MCF 10A (cell line): ENCODE measurements at regions of chr1 and their contacts with region 1.

Region 1: DNA sequence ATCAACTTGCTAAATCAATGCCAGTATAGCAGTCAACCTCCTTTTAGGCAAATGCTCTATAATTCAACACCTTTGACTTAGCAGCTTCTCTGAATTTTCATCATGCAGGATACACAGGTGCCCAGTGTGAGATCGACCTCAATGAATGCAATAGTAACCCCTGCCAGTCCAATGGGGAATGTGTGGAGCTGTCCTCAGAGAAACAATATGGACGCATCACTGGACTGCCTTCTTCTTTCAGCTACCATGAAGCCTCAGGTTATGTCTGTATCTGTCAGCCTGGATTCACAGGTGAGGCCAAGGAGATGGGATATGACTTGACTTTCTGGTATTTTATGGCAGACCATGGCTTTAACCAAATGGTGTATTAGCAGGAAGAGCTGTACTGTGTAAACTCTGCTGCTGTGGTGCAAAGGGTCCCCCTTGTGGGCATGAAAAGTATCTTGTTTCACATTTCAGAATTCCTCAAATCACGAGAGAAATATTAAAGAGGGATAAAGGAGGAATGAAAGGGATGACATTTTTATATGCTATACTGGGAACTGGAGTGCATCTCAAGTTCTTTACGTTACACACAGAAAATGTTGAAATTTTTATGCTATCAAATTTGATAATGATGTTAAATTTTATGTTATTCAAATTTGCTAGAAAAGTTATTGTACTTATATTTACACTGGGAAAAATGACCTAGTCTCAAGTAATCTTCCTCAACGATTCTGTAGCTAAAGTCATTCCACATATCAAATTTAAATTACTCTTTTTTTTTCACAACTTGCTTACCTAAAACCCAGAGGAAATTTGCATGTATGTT is 88.9 kb downstream of the CRB1 start:
- DNase-seq: peak; percentile 76
- H3K4me3 Mint-ChIP-seq: no peak overlapping the region
- H3K27ac Mint-ChIP-seq: no peak overlapping the region
- H3K4me1 Mint-ChIP-seq: no peaks in the 10 kb centered on the region
- H3K27me3 Mint-ChIP-seq: no peaks in the 10 kb centered on the region
- CTCF ChIP-seq: peak; percentile 88

Region 2: DNA sequence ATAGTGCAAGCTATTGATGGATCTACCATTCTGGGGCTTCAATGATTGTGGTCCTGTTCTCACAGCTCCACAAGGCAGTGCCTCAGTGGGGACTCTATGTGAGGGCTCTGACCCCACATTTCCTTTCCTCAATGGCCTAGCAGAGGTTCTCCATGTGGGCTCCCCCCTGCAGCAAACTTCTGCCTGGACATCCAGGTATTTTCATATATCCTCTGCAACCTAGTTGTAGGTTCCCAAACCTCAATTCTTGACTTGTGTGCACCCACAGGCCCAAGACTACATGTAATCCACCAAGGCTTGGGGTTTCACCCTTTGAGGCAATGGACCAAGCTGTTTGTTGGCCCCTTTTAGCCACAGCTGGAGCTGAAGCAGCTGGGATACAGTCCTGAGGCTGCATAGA is 618.2 kb before region 1 on chr1:
- CTCF ChIA-PET with region 1: no interaction called
- POLR2A ChIA-PET with region 1: no interaction called
- intact Hi-C with region 1: loop called (anchors 5 kb)
- DNase-seq: no peak
- H3K4me3 Mint-ChIP-seq: no peak overlapping the region
- H3K27ac Mint-ChIP-seq: no peak overlapping the region
- H3K4me1 Mint-ChIP-seq: peaks cover 6% of the 10 kb centered on the region
- H3K27me3 Mint-ChIP-seq: no peaks in the 10 kb centered on the region
- CTCF ChIP-seq: no peak

Region 3: DNA sequence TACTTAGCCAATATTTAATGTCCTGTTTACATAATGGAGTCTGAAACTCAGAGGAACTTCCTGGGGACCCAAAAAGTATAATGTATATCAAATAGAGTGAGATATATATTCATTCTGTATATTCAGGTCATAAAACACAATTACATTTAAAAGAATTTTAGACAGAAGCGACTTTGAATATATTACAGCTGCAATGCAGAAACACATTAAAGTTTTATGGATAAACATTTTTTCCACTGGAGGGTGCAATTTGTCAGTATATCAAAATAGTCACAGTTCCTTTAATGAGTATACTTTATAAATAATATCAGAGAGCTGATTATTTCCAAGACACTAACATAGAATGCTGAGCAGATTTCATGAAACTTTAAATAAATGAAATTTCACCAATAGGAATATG is 132.8 kb before region 1 on chr1:
- CTCF ChIA-PET with region 1: interaction called, 23 read pairs
- POLR2A ChIA-PET with region 1: no interaction called
- intact Hi-C with region 1: loop called (anchors 1 kb)
- DNase-seq: peak; percentile 25
- H3K4me3 Mint-ChIP-seq: no peak overlapping the region
- H3K27ac Mint-ChIP-seq: no peak overlapping the region
- H3K4me1 Mint-ChIP-seq: no peaks in the 10 kb centered on the region
- H3K27me3 Mint-ChIP-seq: no peaks in the 10 kb centered on the region
- CTCF ChIP-seq: peak; percentile 33

Region 4: GRCh38 chr1:197327776-197328364 is 29.1 kb before region 1 on chr1:
- CTCF ChIA-PET with region 1: interaction called, 81 read pairs
- POLR2A ChIA-PET with region 1: interaction called, 3 read pairs
- intact Hi-C with region 1: loop called (anchors 2 kb)
- DNase-seq: peak; percentile 33
- H3K4me3 Mint-ChIP-seq: no peak overlapping the region
- H3K27ac Mint-ChIP-seq: no peak overlapping the region
- H3K4me1 Mint-ChIP-seq: no peaks in the 10 kb centered on the region
- H3K27me3 Mint-ChIP-seq: no peaks in the 10 kb centered on the region
- CTCF ChIP-seq: peak; percentile 43

Region 5: DNA sequence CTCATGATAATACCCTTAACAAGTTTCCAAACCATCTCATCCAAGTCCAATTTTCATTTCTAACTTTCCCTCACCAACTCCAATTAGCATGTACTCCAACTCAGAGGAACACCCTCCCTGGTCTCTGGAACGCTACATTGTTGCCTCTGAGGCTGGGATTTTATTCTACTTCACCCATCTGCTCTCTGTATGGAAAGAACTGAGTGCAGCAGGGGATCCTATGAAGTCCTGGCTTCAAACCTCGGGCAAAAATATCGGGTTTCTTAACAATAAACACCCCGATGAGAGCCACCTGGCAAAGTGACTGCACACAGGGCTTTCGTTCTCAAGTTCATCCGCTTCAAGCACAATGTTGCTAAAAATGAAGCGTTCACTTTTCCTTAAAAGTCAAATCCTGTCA is 10.7 kb after region 1 on chr1:
- CTCF ChIA-PET with region 1: interaction called, 10 read pairs
- POLR2A ChIA-PET with region 1: no interaction called
- intact Hi-C with region 1: no loop called
- DNase-seq: no peak
- H3K4me3 Mint-ChIP-seq: no peak overlapping the region
- H3K27ac Mint-ChIP-seq: no peak overlapping the region
- H3K4me1 Mint-ChIP-seq: no peaks in the 10 kb centered on the region
- H3K27me3 Mint-ChIP-seq: no peaks in the 10 kb centered on the region
- CTCF ChIP-seq: no peak